Cardiac septum (tissue), 1 donor: ENCODE measurements at regions of chr1 and their contacts with region 1.

Region 1: GRCh38 chr1:220776720-220777326 is 9.9 kb upstream of the MTARC1 start:
- DNase-seq: peak; percentile 92

Region 2: DNA sequence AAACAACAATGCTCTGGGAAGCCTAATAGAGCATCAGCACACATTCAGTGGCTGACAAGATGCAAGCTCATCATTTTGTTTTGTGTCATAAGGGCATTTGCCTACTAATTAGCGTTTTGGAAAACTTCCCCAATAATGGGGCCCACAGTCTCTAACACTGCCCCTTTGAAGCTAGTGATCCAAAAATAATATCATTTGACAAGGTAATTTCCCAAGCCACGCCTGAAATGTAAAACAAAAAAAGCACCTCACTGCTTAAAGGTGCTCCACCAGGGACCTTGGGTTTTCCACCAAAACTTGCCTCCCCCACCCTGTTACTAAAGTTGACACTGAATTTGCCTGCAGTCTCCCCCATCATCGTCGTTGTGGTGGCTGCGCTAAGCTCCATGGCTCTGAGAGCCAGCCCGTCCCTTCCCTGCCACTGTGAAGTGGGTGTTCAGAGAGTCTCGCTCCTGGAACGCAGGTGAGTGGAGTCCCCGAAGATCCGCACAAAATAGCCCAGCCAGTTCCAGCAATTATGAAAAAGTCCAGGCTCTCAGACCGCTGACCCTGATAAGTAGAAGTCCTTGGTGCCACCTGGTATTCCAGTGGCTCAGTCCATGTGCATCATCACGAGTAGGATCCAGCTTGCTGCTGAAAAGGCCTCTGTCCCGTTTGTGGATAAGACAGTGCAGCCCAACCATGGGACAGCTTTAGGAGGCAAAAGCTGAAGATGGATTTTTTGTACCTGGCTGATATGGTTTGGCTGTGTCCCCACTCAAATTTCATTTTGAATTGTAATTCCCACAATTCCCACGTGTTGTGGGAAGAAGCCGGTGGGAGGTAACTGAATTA is 556.7 kb before region 1 on chr1:
- intact Hi-C with region 1: loop called (anchors 10 kb)
- DNase-seq: no peak

Region 3: DNA sequence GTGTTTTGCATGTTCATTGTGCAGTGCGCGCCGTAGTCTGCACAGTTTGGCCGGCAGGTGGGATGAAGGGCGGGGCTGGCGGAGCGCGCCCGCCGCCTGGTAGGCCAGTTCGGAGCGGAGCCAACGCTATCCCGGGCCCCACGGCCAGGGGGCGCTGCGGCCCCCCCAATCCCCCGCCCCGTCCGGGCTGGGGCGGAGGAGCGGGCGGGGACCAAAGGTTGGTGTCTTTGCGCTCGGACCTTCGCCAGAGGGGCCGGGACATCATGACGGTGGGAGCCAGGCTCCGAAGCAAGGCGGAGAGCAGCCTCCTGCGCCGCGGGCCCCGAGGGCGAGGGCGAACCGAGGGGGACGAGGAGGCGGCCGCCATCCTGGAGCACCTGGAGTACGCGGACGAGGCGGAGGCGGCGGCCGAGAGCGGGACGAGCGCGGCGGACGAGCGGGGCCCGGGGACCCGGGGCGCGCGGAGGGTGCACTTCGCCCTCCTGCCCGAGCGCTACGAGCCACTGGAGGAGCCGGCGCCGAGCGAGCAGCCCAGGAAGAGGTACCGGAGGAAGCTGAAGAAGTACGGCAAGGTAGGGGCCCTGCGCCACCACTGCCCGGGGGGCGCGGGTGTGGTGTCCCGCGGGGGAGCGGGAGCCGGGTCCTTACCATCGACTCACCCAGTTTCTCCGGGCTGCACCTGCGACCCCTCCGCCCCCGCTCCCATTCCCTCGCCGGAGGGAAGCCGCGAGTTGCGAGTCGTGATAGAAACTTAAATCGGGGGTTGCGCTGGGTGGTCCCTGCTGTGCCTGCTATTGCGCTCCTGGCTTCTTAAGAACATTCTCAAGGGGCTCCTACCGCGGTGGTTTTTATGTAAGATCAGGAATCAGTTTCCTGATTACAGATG is 86.4 kb before region 1 on chr1 and contains the start of gene C1orf115:
- intact Hi-C with region 1: loop called (anchors 2 kb)
- DNase-seq: peak; percentile 88
- total RNA-seq, gene C1orf115: 5.5 TPM